ENCODE measurements at regions of chr7 and their contacts with region 1.

Region 1: GRCh38 chr7:108459931-108460551 is 3.8 kb upstream of the NRCAM start:
- DNase-seq: peak in 1 of 2 experiments; percentile 38
- H3K4me3 ChIP-seq: no peak overlapping the region
- H3K27ac ChIP-seq: no peak overlapping the region
- H3K4me1 ChIP-seq: 0 out of 2 replicates have a peak, but pooled peaks cover 10% of the 10 kb centered on the region
- H3K27me3 ChIP-seq: no peaks in the 10 kb centered on the region
- CTCF ChIP-seq: peak; percentile 71

Region 2: GRCh38 chr7:107907790-107908189 is 552.3 kb before region 1 on chr7:
- CTCF ChIA-PET with region 1: no interaction called
- POLR2A ChIA-PET with region 1: no interaction called
- intact Hi-C with region 1: no loop called
- DNase-seq: no peak
- H3K4me3 ChIP-seq: no peak overlapping the region
- H3K27ac ChIP-seq: no peak overlapping the region
- H3K4me1 ChIP-seq: 0 out of 2 replicates have a peak, but pooled peaks cover under 1% of the 10 kb centered on the region
- H3K27me3 ChIP-seq: no peaks in the 10 kb centered on the region
- CTCF ChIP-seq: no peak

Region 3: GRCh38 chr7:108299291-108299898 is 160.6 kb before region 1 on chr7:
- CTCF ChIA-PET with region 1: no interaction called
- POLR2A ChIA-PET with region 1: no interaction called
- intact Hi-C with region 1: loop called (anchors 5 kb)
- DNase-seq: peak; percentile 53 to 91
- H3K4me3 ChIP-seq: no peak overlapping the region
- H3K27ac ChIP-seq: peak overlapping the region; percentile 63
- H3K4me1 ChIP-seq: peaks cover 30% of the 10 kb centered on the region
- H3K27me3 ChIP-seq: no peaks in the 10 kb centered on the region
- CTCF ChIP-seq: no peak

Region 4: DNA sequence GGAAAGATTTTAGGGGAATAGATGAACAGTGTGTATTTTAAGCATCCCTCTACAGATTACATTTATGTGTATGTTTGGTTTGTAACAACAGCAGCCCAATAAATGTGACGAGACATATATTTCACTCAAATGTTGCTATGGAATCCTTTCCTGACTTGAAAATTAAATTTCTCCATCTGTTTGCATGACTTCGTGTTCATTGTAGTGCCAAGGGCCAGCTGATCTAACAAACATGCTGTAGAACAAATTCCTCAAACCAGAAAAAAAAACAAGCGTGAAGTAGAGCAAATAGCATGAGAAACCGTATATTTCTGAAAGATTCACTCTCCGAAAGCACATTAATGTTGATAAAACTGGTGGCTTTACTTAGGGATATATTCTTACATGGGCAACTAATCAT is 91.6 kb before region 1 on chr7:
- CTCF ChIA-PET with region 1: no interaction called
- POLR2A ChIA-PET with region 1: no interaction called
- intact Hi-C with region 1: no loop called
- DNase-seq: no peak
- H3K4me3 ChIP-seq: no peak overlapping the region
- H3K27ac ChIP-seq: no peak overlapping the region
- H3K4me1 ChIP-seq: no peaks in the 10 kb centered on the region
- H3K27me3 ChIP-seq: no peaks in the 10 kb centered on the region
- CTCF ChIP-seq: no peak

Region 5: DNA sequence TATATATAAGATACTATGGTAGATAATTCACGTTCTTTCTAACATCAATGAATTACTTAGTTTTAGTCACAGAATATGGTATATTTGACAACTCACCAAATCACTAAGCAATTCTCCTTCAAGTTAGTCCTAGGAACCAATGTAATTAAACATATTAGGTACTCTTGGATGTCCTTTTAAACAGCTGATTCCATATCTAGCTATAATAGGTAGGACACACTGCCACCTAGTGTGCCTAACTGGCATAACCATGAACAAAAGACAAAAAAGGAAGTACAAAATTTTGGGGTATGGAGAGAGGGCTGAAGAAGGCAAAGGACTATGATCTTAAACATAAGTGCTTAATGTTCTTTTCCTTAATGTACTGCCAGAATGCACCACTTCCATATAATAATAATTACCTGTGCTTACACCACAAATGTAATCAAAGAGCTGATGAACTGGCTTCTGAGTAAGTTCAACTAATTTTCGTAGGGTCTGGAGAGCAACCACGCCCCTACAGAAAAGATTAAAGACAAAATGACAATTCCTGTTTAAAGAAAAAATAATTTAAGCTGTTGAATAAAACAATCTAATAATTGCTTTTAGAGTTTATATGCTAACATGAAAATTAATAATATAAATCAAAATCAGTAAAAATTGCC is 37.2 kb after region 1 on chr7:
- CTCF ChIA-PET with region 1: no interaction called
- POLR2A ChIA-PET with region 1: no interaction called
- intact Hi-C with region 1: loop called (anchors 1 kb)
- DNase-seq: peak; percentile 40 to 49
- H3K4me3 ChIP-seq: no peak overlapping the region
- H3K27ac ChIP-seq: no peak overlapping the region
- H3K4me1 ChIP-seq: no peaks in the 10 kb centered on the region
- H3K27me3 ChIP-seq: no peaks in the 10 kb centered on the region
- CTCF ChIP-seq: peak; percentile 92

Measured in PC-9 (cell line).